ENCODE measurements at regions of chr10 and their contacts with region 1.

Region 1: GRCh38 chr10:8331883-8332729 is 277.6 kb downstream of the GATA3 start:
- DNase-seq: peak; percentile 90
- H3K4me3 Mint-ChIP-seq: peak overlapping the region; percentile 72
- H3K27ac Mint-ChIP-seq: peak overlapping the region; percentile 79
- H3K4me1 Mint-ChIP-seq: peaks cover 72% of the 10 kb centered on the region
- H3K27me3 Mint-ChIP-seq: no peaks in the 10 kb centered on the region

Region 2: DNA sequence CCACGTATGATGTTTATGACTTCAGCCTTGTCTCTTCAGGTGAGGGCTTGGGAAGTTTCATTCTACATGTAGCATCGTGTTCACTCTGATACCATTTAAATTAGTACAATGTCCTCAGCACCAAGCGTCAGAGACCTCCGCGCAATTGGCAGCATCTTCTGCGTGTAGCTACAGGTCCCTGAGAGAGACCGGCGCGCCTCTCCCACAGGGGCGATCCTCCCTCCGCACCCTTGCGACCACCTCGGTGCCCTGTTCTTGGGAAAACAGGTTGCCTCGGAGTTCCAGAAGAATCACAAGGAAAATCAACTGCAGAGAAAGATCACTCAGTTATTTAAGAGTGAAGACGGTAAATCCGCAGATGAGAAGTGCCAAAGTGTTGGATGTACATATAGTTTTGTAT is 71.5 kb before region 1 on chr10:
- CTCF ChIA-PET with region 1: no interaction called
- POLR2A ChIA-PET with region 1: no interaction called
- intact Hi-C with region 1: no loop called
- DNase-seq: no peak
- H3K4me3 Mint-ChIP-seq: no peak overlapping the region
- H3K27ac Mint-ChIP-seq: no peak overlapping the region
- H3K4me1 Mint-ChIP-seq: peaks cover 4% of the 10 kb centered on the region
- H3K27me3 Mint-ChIP-seq: no peaks in the 10 kb centered on the region

Region 3: GRCh38 chr10:8374334-8374733 is 42.2 kb after region 1 on chr10:
- CTCF ChIA-PET with region 1: no interaction called
- POLR2A ChIA-PET with region 1: no interaction called
- intact Hi-C with region 1: no loop called
- DNase-seq: no peak
- H3K4me3 Mint-ChIP-seq: no peak overlapping the region
- H3K27ac Mint-ChIP-seq: no peak overlapping the region
- H3K4me1 Mint-ChIP-seq: peaks cover 15% of the 10 kb centered on the region
- H3K27me3 Mint-ChIP-seq: no peaks in the 10 kb centered on the region

Region 4: GRCh38 chr10:9010093-9010492 is 678.0 kb after region 1 on chr10:
- CTCF ChIA-PET with region 1: no interaction called
- POLR2A ChIA-PET with region 1: no interaction called
- intact Hi-C with region 1: loop called (anchors 5 kb)
- DNase-seq: peak; percentile 38
- H3K4me3 Mint-ChIP-seq: peak overlapping the region; percentile 39
- H3K27ac Mint-ChIP-seq: peak overlapping the region; percentile 79
- H3K4me1 Mint-ChIP-seq: peaks cover 54% of the 10 kb centered on the region
- H3K27me3 Mint-ChIP-seq: no peaks in the 10 kb centered on the region

Measured in activated CD4-positive, alpha-beta memory T cell treated with anti-CD3 and anti-CD28 coated beads for 36 hours (primary cell).